ENCODE measurements at regions of chr13 and their contacts with region 1.

Region 1: GRCh38 chr13:99436686-99437416 is 64.4 kb upstream of the TM9SF2 start:
- DNase-seq: peak; percentile 80 to 86 (median 85)
- ATAC-seq: peak; percentile 74
- H3K4me3 ChIP-seq: no peak overlapping the region
- H3K27ac ChIP-seq: no peak overlapping the region
- H3K4me1 ChIP-seq: peaks cover 7% of the 10 kb centered on the region
- H3K27me3 ChIP-seq: no peaks in the 10 kb centered on the region
- CTCF ChIP-seq: peak; percentile 99 to 100 (median 100)
- POLR2A ChIP-seq: no peak

Region 2: DNA sequence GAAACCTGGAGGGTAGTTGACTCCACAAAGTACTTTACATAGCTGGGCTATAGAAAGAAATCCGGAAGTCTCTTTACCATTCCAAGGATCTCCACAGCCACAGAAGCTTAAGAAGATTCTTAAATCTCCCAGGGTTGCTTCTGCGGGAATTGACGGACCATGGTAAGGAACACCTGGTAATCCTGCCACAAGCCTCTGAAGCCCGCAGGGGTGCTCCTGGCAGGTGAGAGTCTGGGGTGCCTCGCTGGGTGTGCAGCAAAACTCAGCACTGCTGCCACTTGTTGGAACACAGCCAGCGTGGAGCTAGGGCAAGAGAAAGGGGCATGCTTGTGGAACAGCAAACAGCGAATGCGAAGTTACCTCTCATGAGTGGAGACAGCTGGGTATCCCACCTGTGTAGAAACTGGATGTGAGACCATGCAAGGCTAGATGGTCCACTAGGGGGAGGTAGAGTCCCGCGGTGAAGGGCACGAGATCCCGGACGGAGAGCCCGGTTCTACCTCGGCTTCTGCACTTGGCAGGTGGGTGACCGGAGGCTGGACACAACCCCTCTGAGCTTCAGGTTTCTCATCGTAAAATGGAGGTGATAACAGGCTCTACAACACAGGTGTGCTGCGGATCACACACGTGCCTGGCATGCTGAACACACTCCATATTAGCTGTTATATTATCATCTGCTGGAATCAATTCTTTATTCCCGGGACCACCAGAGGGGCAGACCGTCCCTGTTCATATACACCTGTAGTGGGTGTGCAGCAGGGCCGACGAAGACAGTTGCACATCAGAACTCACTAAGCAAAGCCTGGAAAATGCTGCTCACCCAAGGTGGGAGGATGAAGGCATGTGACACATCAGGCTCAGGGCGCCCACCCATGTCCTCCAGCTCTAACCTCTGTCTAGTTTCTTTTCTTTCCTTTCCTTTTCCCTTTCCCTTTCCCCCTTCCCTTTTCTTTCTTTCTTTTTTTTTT is 260.3 kb before region 1 on chr13:
- intact Hi-C with region 1: loop called (anchors 5 kb)
- DNase-seq: peak; percentile 78 to 83 (median 80)
- ATAC-seq: peak; percentile 78
- H3K4me3 ChIP-seq: no peak overlapping the region
- H3K27ac ChIP-seq: no peak overlapping the region
- H3K4me1 ChIP-seq: no peaks in the 10 kb centered on the region
- H3K27me3 ChIP-seq: no peaks in the 10 kb centered on the region
- CTCF ChIP-seq: peak; percentile 85 to 94 (median 90)
- POLR2A ChIP-seq: no peak

Region 3: GRCh38 chr13:100547791-100548201 is 1110.9 kb after region 1 on chr13:
- intact Hi-C with region 1: no loop called
- DNase-seq: peak; percentile 41 to 65 (median 55)
- ATAC-seq: peak; percentile 12
- H3K4me3 ChIP-seq: no peak overlapping the region
- H3K27ac ChIP-seq: peak overlapping the region; percentile 39 to 75 (median 66)
- H3K4me1 ChIP-seq: peaks cover 39% of the 10 kb centered on the region
- H3K27me3 ChIP-seq: no peaks in the 10 kb centered on the region
- CTCF ChIP-seq: no peak
- POLR2A ChIP-seq: no peak